Activated CD4-positive, alpha-beta T cell treated with anti-CD3 and anti-CD28 coated beads for 36 hours (primary cell): ENCODE measurements at regions of chr5 and their contacts with region 1.

Region 1: GRCh38 chr5:173331956-173332479 is 3.8 kb upstream of the STC2 start:
- DNase-seq: peak; percentile 95
- ATAC-seq: peak; percentile 55
- H3K4me3 Mint-ChIP-seq: no peak overlapping the region
- H3K27ac Mint-ChIP-seq: peak overlapping the region; percentile 39
- H3K4me1 Mint-ChIP-seq: peaks cover 26% of the 10 kb centered on the region
- H3K27me3 Mint-ChIP-seq: peaks cover 50% of the 10 kb centered on the region

Region 2: DNA sequence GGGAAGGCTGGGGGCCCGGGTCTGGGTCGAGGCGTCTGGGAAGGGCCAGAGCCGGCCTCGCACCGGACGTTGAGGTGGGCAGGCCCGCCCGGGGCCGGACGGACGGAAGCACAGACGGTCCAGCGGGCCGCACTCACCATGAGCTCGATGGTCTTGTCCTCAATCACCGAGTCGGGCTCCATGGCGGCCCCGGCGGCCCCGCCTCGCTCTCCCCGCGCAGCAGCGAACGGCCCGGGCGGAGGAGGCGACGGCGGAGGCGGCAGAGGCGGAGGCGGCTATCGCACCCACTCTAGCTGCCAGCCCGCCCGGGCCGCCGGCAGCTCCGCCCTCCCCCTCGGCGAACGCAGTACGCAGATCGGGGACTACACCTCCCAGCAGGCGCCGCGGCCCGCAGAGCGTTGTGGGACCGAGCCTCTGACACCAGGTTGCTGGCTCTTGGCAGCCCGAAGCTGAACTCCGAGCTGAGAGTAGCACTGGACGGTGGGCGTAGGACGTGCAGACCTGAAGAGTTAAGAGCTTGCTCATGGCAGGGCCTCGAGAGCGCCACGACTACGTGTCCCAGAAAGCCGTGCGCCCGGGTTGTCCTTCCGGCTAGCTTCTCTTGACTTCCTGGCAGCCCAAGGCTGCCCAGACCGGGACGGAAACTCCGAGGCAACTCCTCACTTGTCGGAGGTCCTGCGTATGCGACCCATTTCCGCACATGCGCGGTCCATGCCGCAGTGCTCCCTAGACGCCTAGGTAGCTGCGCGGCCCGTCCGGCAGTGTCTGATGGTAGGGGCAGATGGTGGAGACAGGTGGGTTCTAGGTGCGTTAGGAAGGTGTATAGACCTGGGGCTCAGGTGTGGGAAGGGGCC is 1325.5 kb before region 1 on chr5 and contains the start of gene FBXW11:
- CTCF ChIA-PET with region 1: no interaction called
- POLR2A ChIA-PET with region 1: no interaction called
- intact Hi-C with region 1: loop called in 1 of 2 experiments (anchors 5 kb)
- DNase-seq: peak; percentile 97
- ATAC-seq: peak; percentile 85
- H3K4me3 Mint-ChIP-seq: peak within 1 kb of the TSS; percentile 92
- H3K27ac Mint-ChIP-seq: peak within 1 kb of the TSS; percentile 98
- H3K4me1 Mint-ChIP-seq: peaks cover 43% of the 10 kb centered on the region
- H3K27me3 Mint-ChIP-seq: no peaks in the 10 kb centered on the region
- total RNA-seq, gene FBXW11: 33.8 to 39.5 TPM

Region 3: DNA sequence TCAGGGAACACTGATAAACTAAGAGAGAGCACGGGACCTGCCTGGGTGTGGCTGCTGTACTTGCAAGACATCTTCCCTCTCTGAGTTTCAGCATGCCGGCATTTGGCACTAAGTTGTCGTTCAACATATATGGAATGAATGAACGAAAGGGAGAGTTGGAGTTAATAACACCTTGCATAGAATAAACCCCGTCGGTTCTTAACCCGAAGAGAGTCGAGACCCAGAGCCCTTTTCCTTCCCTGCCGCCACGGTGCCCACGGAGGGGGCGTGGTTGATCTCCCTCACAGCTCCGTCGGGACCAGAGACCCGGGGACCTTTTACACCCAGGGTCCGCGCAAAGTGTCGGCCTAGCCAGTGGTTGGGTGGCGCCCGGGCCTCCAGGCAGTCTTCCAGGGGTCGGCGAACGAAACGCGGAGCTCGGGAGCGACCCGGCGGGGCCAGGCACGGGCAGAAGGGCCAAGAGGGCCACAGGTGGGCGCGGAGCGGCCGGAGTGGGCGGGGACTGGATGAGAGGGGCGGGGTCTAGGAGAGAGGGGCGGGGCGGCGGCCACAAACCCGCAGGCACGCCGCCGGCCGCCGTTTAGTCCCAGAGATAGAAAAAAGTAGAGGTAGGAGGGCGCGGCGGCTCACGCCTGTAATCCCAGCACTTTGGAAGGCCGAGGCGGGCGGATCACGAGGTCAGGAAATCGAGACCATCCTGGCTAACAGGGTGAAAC is 373.5 kb before region 1 on chr5:
- CTCF ChIA-PET with region 1: no interaction called
- POLR2A ChIA-PET with region 1: no interaction called
- intact Hi-C with region 1: loop called in 1 of 2 experiments (anchors 1 kb)
- DNase-seq: peak; percentile 83
- ATAC-seq: peak; percentile 76
- H3K4me3 Mint-ChIP-seq: peak overlapping the region; percentile 93
- H3K27ac Mint-ChIP-seq: peak overlapping the region; percentile 94
- H3K4me1 Mint-ChIP-seq: peaks cover 17% of the 10 kb centered on the region
- H3K27me3 Mint-ChIP-seq: no peaks in the 10 kb centered on the region

Region 4: DNA sequence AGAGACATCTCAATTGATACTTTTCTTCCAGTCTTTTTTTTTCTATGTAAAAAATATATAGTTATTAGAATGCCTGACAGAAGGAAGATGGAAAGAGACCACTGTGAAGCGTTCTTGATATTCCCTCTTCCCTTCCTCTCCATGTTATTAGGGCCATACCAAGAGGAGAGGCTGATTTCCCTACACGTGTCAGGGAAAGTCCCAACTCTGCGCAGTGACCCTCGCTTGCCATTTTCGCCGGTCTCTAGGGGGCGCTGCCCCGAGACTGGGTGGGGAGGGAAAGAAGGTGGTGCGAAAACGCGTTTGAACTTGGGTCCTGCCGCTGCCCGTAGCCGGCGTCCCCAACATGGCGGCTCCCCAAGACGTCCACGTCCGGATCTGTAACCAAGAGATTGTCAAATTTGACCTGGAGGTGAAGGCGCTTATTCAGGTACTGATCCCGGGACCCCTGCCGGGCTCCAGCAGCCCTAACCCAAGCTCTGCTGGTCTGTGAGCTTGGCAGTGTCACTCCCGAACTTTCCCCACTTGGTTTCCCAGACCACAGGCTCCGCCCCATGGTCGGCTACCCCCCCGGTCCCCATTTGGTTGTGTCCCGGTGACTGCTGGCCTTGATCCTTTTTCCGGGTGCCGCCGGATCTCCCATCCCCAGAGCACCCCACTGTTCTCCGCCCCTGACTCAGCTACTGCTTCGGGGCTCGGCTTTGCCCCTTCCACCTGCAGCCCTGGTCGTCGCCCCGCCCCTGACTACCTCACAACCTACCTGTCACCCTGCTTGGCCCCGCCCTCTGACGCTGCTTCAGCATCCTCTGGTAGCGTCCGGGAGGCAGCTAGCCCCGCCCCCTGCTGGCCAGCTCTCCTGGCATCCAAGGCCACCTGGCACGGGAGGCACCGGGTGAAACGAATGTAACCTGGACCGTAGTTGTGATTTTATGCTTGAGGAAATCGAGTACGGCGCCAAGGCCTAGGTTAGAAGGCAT is 187.5 kb before region 1 on chr5 and contains the start of gene BNIP1:
- CTCF ChIA-PET with region 1: no interaction called
- POLR2A ChIA-PET with region 1: no interaction called
- intact Hi-C with region 1: loop called in 1 of 2 experiments (anchors 1 kb)
- DNase-seq: peak; percentile 98
- ATAC-seq: peak; percentile 94
- H3K4me3 Mint-ChIP-seq: peak within 1 kb of the TSS; percentile 99
- H3K27ac Mint-ChIP-seq: peak within 1 kb of the TSS; percentile 99
- H3K4me1 Mint-ChIP-seq: peaks cover 10% of the 10 kb centered on the region
- H3K27me3 Mint-ChIP-seq: no peaks in the 10 kb centered on the region
- total RNA-seq, gene BNIP1: 24.2 to 26.8 TPM

Region 5: DNA sequence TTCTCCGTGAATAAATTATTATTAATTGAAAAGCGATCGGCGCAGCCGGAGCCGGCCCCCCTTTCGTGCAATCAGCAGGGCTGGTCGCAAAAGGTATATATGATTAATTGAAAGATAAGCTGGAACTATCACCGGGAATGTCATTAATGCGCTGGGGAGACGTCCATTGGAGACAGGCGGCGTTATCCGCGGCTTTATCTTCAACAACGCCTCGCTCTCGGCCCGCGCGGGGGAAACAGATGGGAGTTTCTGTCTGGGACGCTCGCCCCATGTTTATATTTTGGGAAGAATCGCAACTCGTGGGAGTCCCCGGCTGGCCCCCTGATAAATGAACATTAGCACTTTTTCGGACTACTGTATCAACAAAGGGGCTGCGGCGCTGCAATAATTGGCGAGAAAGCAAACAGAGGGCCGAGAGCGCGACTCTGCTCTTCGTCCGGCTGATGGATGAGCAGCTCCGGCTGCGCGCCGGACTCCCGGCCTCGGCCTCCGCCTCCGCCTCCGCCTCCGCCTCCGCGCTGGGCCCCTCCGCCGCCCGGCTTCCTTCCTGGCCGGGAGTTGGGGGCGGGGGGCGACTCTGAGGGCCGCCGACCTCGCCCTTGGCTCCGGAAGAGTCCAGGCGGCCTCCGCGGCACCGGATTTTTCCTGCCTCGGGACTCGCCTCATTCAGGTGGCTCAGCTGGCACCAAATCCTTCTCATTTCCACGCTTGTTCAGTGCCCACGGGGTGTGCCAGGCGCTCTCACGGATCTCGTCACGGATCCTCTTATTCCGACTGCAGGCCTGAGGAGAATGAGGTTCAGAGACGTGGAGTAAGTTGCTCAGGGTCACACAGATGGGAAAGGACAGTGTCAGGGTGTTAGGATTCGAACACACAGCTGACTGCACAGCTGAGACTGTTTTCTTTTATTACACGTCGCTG is 93.4 kb before region 1 on chr5:
- CTCF ChIA-PET with region 1: interaction called, 4 read pairs
- POLR2A ChIA-PET with region 1: no interaction called
- intact Hi-C with region 1: loop called (anchors 1 to 5 kb)
- DNase-seq: no peak
- ATAC-seq: no peak
- H3K4me3 Mint-ChIP-seq: peak overlapping the region; percentile 27
- H3K27ac Mint-ChIP-seq: no peak overlapping the region
- H3K4me1 Mint-ChIP-seq: peaks cover 38% of the 10 kb centered on the region
- H3K27me3 Mint-ChIP-seq: peaks cover 87% of the 10 kb centered on the region

Region 6: DNA sequence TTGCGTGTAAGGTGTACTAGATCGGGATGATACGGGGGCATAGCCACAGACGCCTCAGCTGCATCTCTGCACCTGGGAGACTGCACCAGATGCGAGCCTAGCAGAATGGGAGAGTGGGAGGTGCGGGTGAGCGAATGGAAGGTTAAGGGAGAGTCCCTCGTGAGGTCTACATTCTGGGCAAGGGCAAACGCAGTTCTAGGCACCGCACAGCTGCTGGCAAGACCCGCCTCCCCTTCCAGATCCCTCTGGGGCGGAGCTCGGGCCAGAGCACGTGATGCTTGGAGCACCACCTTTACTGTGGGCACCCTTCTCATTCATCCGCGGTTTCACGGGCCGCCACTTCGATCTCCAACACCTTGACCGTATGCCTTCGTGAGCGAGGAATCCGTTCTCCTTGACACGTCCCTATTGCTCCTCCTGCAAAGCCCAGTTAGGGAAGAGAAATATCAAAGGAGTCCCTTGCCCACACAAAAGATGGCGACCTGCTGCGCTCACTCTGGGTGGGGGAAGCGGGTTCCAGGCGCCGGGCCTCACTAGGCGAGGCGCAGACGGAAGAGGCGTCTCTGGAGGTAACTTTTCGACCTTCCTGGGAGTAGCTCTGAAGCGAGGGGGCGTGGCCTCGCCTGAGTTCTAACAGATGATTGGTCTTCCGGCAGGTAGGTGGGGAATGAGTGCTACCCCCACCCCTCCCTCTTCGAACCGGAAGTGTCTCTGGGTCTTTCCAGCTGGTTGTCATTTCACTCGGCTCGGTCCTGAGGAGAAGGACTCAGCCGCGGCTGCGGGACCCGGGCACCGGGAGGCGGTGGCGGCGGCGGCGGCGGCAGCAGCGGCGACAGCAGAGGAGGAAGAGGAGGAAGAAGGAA is 555.8 kb after region 1 on chr5 and contains the start of gene CPEB4:
- CTCF ChIA-PET with region 1: no interaction called
- POLR2A ChIA-PET with region 1: no interaction called
- intact Hi-C with region 1: loop called in 1 of 2 experiments (anchors 2 kb)
- DNase-seq: peak; percentile 98
- ATAC-seq: peak; percentile 96
- H3K4me3 Mint-ChIP-seq: peak within 1 kb of the TSS; percentile 96
- H3K27ac Mint-ChIP-seq: peak within 1 kb of the TSS; percentile 98
- H3K4me1 Mint-ChIP-seq: peaks cover 67% of the 10 kb centered on the region
- H3K27me3 Mint-ChIP-seq: no peaks in the 10 kb centered on the region
- total RNA-seq, gene CPEB4: 5.6 to 8.3 TPM